ENCODE measurements at regions of chr19 and their contacts with region 1.

Region 1: DNA sequence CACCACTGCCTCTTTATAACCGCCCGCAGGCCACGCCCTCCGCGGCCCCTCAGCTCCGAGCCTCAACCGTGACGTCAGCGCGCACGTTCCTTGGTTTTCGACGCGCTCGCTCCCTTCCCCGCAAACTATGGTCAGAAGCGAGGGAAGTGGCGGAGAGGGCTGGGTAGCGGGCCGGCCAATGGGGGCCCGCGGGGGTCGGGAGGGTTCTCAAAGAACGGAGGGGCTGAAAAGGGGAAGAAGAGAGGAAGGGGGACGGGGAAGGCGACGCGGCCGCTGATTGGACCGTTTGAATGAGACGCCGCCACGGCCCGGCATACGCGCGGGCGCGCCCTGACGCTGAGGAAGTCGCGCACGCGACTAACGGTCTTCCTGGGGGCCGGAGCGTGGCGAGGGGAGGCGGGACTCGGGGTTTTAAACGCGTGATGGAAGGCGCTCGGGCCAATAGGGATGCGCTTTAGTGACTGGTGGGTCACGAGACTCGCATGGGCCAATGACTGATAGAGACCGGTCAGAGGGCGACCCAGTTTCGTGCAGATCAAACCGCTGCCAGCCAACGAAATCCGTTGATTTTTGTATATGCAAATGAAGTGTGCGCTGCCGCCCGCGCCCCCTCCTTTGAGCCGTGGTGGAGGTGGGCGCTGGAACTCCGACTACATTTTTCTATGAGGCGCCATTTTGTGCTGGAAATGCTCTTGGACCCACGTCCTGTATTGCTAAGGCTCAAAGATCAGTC is 378 bp upstream of the UBE2S start:
- DNase-seq: peak; percentile 96
- H3K4me3 ChIP-seq: peak overlapping the region; percentile 38 to 98 (median 72)
- H3K27ac ChIP-seq: peak overlapping the region; percentile 94
- H3K4me1 ChIP-seq: peaks cover 0 to 20% (median 13%) of the 10 kb centered on the region in 4 experiments; a peak in 6 of 7 replicates
- H3K27me3 ChIP-seq: peaks cover 0 to 4% (median 1%) of the 10 kb centered on the region in 4 experiments; a peak in 2 of 7 replicates
- CTCF ChIP-seq: no peak
- EP300 ChIP-seq: no peak
- POLR2A ChIP-seq: peak in 1 of 2 experiments; percentile 95; a peak in 2 of 3 replicates
- RAD21 ChIP-seq: peak in 1 of 2 experiments; percentile 5; a peak in 1 of 4 replicates

Region 2: DNA sequence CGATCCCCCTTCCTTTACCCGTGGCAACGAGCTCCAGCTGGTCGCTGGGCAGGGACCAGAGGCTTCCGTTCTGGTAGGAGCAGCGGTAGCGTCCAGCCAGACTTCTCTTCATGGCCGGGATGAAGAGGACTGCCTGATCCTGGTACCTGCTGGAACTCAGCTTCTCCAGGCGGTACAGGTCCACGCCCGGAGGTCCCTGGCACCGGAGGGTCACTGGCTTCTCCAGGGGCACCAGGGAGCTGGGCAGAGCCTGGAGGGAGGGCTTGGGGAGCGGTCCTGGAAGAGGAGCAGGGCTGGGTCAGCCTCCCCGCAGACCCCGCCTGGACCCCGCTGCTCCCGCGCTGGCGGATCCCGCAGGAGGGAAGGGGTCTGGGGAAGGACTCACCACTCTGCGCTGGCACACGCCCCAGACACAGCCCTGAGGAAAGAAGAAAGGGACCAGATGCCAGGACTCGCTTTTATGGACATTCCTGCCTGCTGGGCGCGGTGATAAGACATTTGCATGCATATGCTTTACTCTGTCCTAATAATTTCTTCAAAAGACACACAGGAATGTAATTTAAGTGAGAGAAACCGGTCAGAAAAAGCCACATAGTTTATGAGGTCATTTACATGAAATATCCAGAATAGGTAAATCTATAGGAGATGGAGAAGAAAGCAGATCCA is 375.7 kb before region 1 on chr19:
- CTCF ChIA-PET with region 1: no interaction called
- POLR2A ChIA-PET with region 1: no interaction called
- DNase-seq: no peak
- H3K4me3 ChIP-seq: no peak overlapping the region
- H3K27ac ChIP-seq: no peak overlapping the region
- H3K4me1 ChIP-seq: no peaks in the 10 kb centered on the region
- H3K27me3 ChIP-seq: no peaks in the 10 kb centered on the region
- CTCF ChIP-seq: no peak
- EP300 ChIP-seq: no peak
- POLR2A ChIP-seq: no peak
- RAD21 ChIP-seq: no peak

Region 3: GRCh38 chr19:55228403-55229031 is 179.4 kb before region 1 on chr19 and contains the start of gene TMEM86B:
- CTCF ChIA-PET with region 1: no interaction called
- POLR2A ChIA-PET with region 1: interaction called, 10 read pairs
- DNase-seq: no peak
- H3K4me3 ChIP-seq: no peak within 1 kb of the TSS
- H3K27ac ChIP-seq: no peak within 1 kb of the TSS
- H3K4me1 ChIP-seq: no peaks in the 10 kb centered on the region
- H3K27me3 ChIP-seq: no peaks in the 10 kb centered on the region
- CTCF ChIP-seq: no peak
- EP300 ChIP-seq: no peak
- POLR2A ChIP-seq: no peak
- RAD21 ChIP-seq: no peak
- total RNA-seq, gene TMEM86B: 2.0 and 2.1 TPM in 2 replicates

Region 4: GRCh38 chr19:55301459-55302317 is 106.3 kb before region 1 on chr19:
- CTCF ChIA-PET with region 1: no interaction called
- POLR2A ChIA-PET with region 1: interaction called, 11 read pairs
- DNase-seq: peak; percentile 73 to 100
- H3K4me3 ChIP-seq: peak overlapping the region in 2 of 4 experiments; percentile 23 to 39; a peak in 4 of 8 replicates
- H3K27ac ChIP-seq: no peak overlapping the region
- H3K4me1 ChIP-seq: peaks cover 0 to 8% (median 3%) of the 10 kb centered on the region in 4 experiments; a peak in 3 of 7 replicates
- H3K27me3 ChIP-seq: no peaks in the 10 kb centered on the region
- CTCF ChIP-seq: peak; percentile 89 to 95 (median 94)
- EP300 ChIP-seq: no peak
- POLR2A ChIP-seq: no peak
- RAD21 ChIP-seq: peak; percentile 71 to 74

Region 5: GRCh38 chr19:55339048-55339888 is 68.7 kb before region 1 on chr19 and contains the start of gene KMT5C:
- CTCF ChIA-PET with region 1: interaction called, 3 read pairs
- POLR2A ChIA-PET with region 1: interaction called, 42 read pairs
- DNase-seq: peak; percentile 100
- H3K4me3 ChIP-seq: peak within 1 kb of the TSS; percentile 69 to 85 (median 84)
- H3K27ac ChIP-seq: peak within 1 kb of the TSS; percentile 99
- H3K4me1 ChIP-seq: peaks cover 0 to 16% (median 9%) of the 10 kb centered on the region in 4 experiments; a peak in 6 of 7 replicates
- H3K27me3 ChIP-seq: peaks cover 0 to 3% (median 0%) of the 10 kb centered on the region in 4 experiments; a peak in 1 of 7 replicates
- CTCF ChIP-seq: peak in 1 of 3 experiments; percentile 7; a peak in 1 of 4 replicates
- EP300 ChIP-seq: no peak
- POLR2A ChIP-seq: no peak; a peak in 1 of 3 replicates
- RAD21 ChIP-seq: no peak; a peak in 1 of 4 replicates
- total RNA-seq, gene KMT5C: 31.5 and 33.4 TPM in 2 replicates

Region 6: DNA sequence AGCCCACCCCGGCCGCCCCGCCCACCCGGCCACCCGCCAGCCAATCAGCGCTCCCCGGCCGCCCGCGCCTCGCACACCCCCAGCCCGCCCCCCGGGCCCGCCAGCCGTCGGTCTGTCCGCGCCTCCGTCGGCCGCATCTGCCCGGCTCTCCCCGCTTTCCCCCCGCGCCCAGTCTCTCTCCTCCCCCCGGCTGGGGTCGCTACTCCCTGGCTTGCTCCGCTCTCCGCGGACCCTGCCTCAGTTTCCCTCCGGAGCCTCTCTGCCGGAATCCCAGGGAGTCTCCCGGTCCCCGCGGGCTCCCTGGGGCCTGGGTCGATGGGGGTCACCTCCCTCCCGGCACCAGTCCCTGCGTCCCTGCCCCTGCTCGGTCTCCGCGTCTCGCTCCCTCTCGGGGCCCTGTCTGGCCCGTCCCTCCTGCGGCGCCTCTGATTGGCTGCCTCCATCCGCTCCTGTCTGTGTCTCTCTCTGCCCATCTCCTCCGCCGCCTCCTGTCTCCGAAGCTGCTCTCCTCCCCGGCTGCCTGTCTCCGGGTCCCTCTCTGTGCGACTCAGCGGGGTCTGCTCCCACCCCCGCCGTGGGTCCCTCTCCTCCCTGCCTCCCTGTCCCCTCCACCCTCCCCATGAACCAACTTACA is 38.2 kb before region 1 on chr19:
- CTCF ChIA-PET with region 1: interaction called, 3 read pairs
- POLR2A ChIA-PET with region 1: interaction called, 14 read pairs
- DNase-seq: peak in 1 of 2 experiments; percentile 87
- H3K4me3 ChIP-seq: peak overlapping the region; percentile 24 to 71 (median 46)
- H3K27ac ChIP-seq: no peak overlapping the region
- H3K4me1 ChIP-seq: peaks cover 0 to 31% (median 24%) of the 10 kb centered on the region in 4 experiments; a peak in 6 of 7 replicates
- H3K27me3 ChIP-seq: peaks cover 16 to 52% (median 43%) of the 10 kb centered on the region in 4 experiments
- CTCF ChIP-seq: no peak
- EP300 ChIP-seq: no peak
- POLR2A ChIP-seq: no peak
- RAD21 ChIP-seq: no peak

Region 7: GRCh38 chr19:55418185-55418584 is 10.2 kb after region 1 on chr19:
- CTCF ChIA-PET with region 1: interaction called, 15 read pairs
- POLR2A ChIA-PET with region 1: interaction called, 874 read pairs
- DNase-seq: peak; percentile 41 to 71
- H3K4me3 ChIP-seq: no peak overlapping the region
- H3K27ac ChIP-seq: no peak overlapping the region
- H3K4me1 ChIP-seq: peaks cover 0 to 2% (median 0%) of the 10 kb centered on the region in 4 experiments; a peak in 1 of 7 replicates
- H3K27me3 ChIP-seq: peaks cover 0 to 9% (median 2%) of the 10 kb centered on the region in 4 experiments; a peak in 2 of 7 replicates
- CTCF ChIP-seq: peak; percentile 45 to 85 (median 72)
- EP300 ChIP-seq: no peak
- POLR2A ChIP-seq: no peak
- RAD21 ChIP-seq: peak; percentile 93 to 97

Region 8: GRCh38 chr19:55494172-55494761 is 86.3 kb after region 1 on chr19:
- CTCF ChIA-PET with region 1: interaction called, 4 read pairs
- POLR2A ChIA-PET with region 1: interaction called, 10 read pairs
- DNase-seq: no peak
- H3K4me3 ChIP-seq: no peak overlapping the region
- H3K27ac ChIP-seq: no peak overlapping the region
- H3K4me1 ChIP-seq: peaks cover 0 to 14% (median 8%) of the 10 kb centered on the region in 4 experiments; a peak in 6 of 7 replicates
- H3K27me3 ChIP-seq: no peaks in the 10 kb centered on the region; a peak in 3 of 7 replicates
- CTCF ChIP-seq: no peak
- EP300 ChIP-seq: no peak
- POLR2A ChIP-seq: no peak
- RAD21 ChIP-seq: no peak

Region 9: DNA sequence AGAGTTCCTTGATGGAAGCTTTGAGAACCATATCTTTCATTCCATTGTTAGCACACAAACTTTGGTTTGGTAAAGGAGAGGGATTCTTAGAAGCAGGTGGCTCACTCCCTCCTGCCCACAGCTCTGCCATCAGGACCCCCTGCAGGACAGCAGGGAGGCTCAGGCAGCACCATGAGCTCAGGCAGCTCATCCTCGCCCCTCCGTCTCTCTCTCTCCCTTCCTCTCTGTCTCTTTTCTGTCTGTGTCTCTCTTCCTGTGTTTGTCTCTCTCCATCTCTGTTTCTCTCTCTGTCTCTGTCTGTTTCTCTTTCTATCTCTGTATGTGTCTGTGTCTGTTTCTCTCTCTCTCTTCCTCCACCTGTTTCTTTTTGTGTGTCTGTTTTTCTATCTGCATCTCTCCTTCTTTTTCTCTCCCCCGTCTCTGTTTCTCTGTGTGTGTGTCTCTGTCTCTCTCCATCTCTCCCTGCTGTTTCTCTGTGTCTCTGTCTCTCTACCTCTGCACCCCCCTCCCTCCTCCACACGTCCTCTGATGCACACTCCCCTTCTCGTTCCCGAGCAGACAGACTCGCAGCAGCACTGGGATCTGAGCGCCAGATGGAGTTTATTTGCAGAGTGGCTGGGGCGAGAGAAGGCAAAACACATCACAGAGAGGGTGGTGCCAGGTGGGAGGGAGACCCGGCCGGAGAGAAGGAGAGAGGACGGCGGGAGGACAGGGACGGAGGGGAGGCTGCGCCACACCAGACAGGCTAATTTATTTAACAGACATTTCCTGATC is 120.3 kb after region 1 on chr19:
- CTCF ChIA-PET with region 1: no interaction called
- POLR2A ChIA-PET with region 1: no interaction called
- DNase-seq: no peak
- H3K4me3 ChIP-seq: no peak overlapping the region
- H3K27ac ChIP-seq: no peak overlapping the region
- H3K4me1 ChIP-seq: peaks cover 0 to 9% (median 2%) of the 10 kb centered on the region in 4 experiments; a peak in 3 of 7 replicates
- H3K27me3 ChIP-seq: no peaks in the 10 kb centered on the region
- CTCF ChIP-seq: no peak
- EP300 ChIP-seq: no peak
- POLR2A ChIP-seq: no peak
- RAD21 ChIP-seq: no peak

Region 10: GRCh38 chr19:55712804-55713631 is 305.1 kb after region 1 on chr19:
- CTCF ChIA-PET with region 1: no interaction called
- POLR2A ChIA-PET with region 1: no interaction called
- DNase-seq: no peak
- H3K4me3 ChIP-seq: no peak overlapping the region
- H3K27ac ChIP-seq: no peak overlapping the region
- H3K4me1 ChIP-seq: no peaks in the 10 kb centered on the region
- H3K27me3 ChIP-seq: no peaks in the 10 kb centered on the region
- CTCF ChIP-seq: no peak
- EP300 ChIP-seq: no peak
- POLR2A ChIP-seq: no peak
- RAD21 ChIP-seq: no peak